ENCODE measurements at regions of chr2 and their contacts with region 1.

Region 1: GRCh38 chr2:120109186-120110061 is 96.5 kb downstream of the EPB41L5 start:
- DNase-seq: no peak
- H3K4me3 Mint-ChIP-seq: no peak overlapping the region
- H3K27ac Mint-ChIP-seq: peak overlapping the region; percentile 42
- H3K4me1 Mint-ChIP-seq: peaks cover 17% of the 10 kb centered on the region
- H3K27me3 Mint-ChIP-seq: no peaks in the 10 kb centered on the region

Region 2: GRCh38 chr2:119315241-119315927 is 794.0 kb before region 1 on chr2:
- CTCF ChIA-PET with region 1: no interaction called
- POLR2A ChIA-PET with region 1: no interaction called
- intact Hi-C with region 1: no loop called
- DNase-seq: no peak
- H3K4me3 Mint-ChIP-seq: no peak overlapping the region
- H3K27ac Mint-ChIP-seq: no peak overlapping the region
- H3K4me1 Mint-ChIP-seq: no peaks in the 10 kb centered on the region
- H3K27me3 Mint-ChIP-seq: no peaks in the 10 kb centered on the region

Region 3: GRCh38 chr2:120169020-120169419 is 59.6 kb after region 1 on chr2:
- CTCF ChIA-PET with region 1: interaction called, 82 read pairs
- POLR2A ChIA-PET with region 1: no interaction called
- intact Hi-C with region 1: no loop called
- DNase-seq: no peak
- H3K4me3 Mint-ChIP-seq: no peak overlapping the region
- H3K27ac Mint-ChIP-seq: no peak overlapping the region
- H3K4me1 Mint-ChIP-seq: peaks cover 2% of the 10 kb centered on the region
- H3K27me3 Mint-ChIP-seq: no peaks in the 10 kb centered on the region

Region 4: DNA sequence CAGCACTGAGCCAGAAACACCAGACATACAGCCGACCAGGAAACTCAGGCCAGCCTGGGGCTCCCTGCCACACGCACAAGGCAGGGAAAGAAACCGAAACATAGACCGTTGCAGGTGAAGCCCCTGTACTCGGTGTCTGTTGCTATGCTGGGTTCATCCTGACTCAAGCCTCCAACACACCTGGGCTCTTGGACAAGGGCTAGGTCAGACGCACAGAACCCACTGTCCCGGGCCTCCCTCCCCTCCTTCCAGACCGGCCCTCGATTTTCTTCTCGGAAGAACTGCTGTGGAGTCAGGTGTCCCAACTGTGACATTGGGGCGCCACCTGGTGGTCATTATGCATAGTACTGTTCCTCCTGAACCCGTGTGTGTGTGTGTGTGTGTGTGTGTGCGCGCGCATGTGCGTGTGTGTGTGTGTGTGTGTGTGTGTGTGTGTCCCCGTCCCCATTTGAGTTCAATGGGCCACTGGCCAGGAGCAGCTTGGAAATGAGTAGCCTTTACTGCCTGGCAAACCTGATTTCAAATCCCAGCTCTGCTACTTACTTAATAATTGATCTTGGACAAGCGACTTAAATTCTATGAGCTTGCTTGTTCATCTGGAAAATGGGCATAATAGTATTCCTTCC is 570.8 kb after region 1 on chr2:
- CTCF ChIA-PET with region 1: interaction called, 5 read pairs
- POLR2A ChIA-PET with region 1: no interaction called
- intact Hi-C with region 1: loop called (anchors 1 kb)
- DNase-seq: peak; percentile 79
- H3K4me3 Mint-ChIP-seq: no peak overlapping the region
- H3K27ac Mint-ChIP-seq: no peak overlapping the region
- H3K4me1 Mint-ChIP-seq: peaks cover 2% of the 10 kb centered on the region
- H3K27me3 Mint-ChIP-seq: peaks cover 13% of the 10 kb centered on the region

Measured in activated CD4-positive, alpha-beta memory T cell treated with anti-CD3 and anti-CD28 coated beads for 36 hours (primary cell).